ENCODE measurements at regions of chr7 and their contacts with region 1.

Region 1: GRCh38 chr7:42940985-42941847 is 9.0 kb downstream of the MRPL32 start:
- DNase-seq: peak; percentile 71 to 97 (median 84)
- H3K4me3 ChIP-seq: peak overlapping the region in 2 of 59 donors; percentile 1 to 5
- H3K27ac ChIP-seq: no peak overlapping the region
- H3K27me3 ChIP-seq: no peaks in the 10 kb centered on the region
- CTCF ChIP-seq: peak; percentile 75 to 97 (median 89)

Region 2: DNA sequence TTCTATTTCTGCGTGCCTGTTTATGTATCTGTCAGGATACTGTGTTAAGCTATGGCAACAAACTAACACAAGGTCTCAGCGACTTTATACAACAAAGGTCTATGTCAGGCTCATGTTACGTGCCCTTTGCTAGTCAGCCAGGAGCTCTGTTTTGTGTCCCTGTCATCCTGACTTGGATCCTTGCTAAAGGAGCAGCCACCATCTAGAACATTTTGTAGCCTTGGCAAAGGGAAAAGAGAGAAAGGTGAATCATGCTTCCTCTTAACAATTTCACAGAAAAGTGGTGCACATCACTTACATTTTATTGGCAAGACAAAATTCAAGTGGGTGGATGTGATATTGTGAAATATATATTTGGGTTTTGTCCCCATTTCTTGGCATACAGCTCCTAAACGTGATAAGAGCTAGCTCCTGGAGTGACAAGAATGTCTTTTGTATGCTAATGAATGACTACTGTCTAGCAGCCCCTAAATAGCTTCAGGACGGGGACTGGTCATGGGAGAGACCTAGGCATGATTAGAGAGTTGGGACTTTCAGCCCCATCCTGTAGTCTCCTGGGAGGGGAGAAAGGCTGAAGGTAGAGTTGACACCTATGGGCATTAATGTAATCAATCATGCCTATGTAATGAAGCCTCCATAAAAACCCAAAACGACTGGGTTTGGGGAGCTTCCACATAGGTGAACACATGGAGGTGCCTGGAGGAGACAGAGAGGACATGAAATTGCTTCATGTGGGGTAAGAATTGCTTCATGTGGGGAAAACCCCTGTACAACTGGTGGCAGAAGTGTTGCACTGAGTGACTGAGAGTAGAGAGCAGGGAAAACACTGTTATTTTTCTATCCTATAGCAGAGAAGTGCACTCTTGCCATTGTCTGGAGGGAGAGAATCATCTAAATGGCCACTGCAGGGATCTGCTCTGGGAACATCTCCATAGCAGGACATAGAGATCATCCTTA is 23.9 kb after region 1 on chr7:
- intact Hi-C with region 1: no loop called
- DNase-seq: no peak
- H3K4me3 ChIP-seq: no peak overlapping the region
- H3K27ac ChIP-seq: peak overlapping the region in 40 of 59 donors; percentile 1 to 80 (median 58)
- H3K27me3 ChIP-seq: no peaks in the 10 kb centered on the region
- CTCF ChIP-seq: no peak

Region 3: DNA sequence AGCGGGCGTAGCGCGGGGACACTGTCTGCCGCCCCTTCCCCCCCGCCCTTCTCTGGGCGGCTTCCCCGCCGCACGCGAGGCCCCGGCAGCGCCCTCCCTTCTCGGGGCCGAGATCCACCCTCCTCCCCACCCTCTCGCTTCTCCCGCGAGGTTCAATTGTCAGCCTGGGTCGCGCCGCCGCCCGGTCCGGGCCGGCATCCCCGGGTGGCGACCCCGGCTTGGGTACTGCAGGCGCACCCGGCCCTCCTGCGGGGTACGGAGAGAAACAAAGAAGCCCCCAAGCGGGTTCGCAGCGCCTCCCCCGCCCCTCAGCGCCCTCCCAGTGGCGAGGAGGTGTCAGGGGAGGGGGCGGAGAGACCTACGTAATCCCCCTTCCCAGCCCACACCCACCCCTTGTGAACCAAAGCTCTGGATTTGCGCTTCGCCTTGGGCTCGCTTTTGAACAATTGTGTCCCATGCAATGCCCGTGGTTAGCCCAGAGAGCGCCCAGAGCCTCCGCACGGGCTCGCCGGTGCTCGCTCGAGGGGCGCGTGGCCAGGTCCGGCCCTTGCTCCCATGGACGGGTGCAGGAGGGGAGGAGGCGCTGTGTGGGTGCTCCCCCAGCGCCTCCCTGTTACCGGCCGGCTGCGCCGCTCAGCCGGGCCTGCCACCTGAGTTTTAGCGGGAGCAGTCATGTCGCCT is 171.9 kb after region 1 on chr7:
- intact Hi-C with region 1: loop called in 1 of 2 experiments (anchors 10 kb)
- DNase-seq: peak in 3 of 10 donors; percentile 21 to 51 (median 37)
- H3K4me3 ChIP-seq: peak overlapping the region; percentile 43 to 79 (median 69)
- H3K27ac ChIP-seq: peak overlapping the region in 57 of 59 donors; percentile 24 to 92 (median 83)
- H3K27me3 ChIP-seq: peaks cover 0 to 74% (median 27%) of the 10 kb centered on the region in 45 donors
- CTCF ChIP-seq: no peak

Region 4: DNA sequence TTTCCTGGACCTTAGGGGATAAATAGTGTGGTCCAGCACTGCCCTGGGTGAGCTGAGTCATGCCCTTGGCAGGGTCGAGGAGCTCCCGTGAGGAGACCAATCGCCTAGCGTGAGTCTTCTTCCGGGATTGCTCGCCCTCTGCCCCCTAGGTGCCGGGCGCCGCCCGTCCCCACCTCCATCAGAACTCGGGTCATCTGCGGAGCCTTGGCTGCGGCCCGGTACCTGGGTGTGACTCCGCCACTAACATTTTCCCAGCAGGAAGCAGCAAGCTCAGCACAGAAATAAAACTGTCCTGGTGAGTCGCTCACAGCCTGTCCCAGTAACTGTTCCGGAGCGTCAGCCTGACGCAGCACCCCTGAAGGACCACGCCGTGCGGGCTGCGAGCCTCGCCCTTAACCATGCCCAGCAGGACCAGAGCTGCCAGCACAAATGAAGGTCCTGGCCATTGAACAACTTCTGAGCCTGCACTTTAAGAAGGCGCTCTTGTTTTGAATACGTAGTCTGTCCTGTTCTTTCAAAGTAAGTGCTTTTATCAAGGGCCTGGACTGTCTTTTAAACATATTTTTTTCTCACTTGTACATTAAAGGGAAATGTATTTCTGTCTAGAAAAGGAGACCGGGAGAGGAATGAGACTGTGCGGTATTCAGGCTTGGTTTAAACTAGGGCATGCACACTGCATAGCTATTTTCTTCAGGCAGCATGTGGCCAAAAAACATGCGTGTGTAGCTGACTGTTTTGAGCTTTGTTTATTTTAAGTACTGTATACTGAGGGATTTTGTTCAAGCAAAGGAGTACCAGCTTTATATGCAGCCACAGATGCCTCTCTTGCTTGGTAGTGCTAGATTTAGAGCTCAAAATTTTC is 308.0 kb after region 1 on chr7:
- intact Hi-C with region 1: loop called in 1 of 2 experiments (anchors 5 kb)
- DNase-seq: peak in 5 of 10 donors; percentile 45 to 63 (median 49)
- H3K4me3 ChIP-seq: peak overlapping the region in 53 of 59 donors; percentile 3 to 57 (median 39)
- H3K27ac ChIP-seq: peak overlapping the region in 58 of 59 donors; percentile 26 to 94 (median 82)
- H3K27me3 ChIP-seq: no peaks in the 10 kb centered on the region
- CTCF ChIP-seq: no peak

Region 5: DNA sequence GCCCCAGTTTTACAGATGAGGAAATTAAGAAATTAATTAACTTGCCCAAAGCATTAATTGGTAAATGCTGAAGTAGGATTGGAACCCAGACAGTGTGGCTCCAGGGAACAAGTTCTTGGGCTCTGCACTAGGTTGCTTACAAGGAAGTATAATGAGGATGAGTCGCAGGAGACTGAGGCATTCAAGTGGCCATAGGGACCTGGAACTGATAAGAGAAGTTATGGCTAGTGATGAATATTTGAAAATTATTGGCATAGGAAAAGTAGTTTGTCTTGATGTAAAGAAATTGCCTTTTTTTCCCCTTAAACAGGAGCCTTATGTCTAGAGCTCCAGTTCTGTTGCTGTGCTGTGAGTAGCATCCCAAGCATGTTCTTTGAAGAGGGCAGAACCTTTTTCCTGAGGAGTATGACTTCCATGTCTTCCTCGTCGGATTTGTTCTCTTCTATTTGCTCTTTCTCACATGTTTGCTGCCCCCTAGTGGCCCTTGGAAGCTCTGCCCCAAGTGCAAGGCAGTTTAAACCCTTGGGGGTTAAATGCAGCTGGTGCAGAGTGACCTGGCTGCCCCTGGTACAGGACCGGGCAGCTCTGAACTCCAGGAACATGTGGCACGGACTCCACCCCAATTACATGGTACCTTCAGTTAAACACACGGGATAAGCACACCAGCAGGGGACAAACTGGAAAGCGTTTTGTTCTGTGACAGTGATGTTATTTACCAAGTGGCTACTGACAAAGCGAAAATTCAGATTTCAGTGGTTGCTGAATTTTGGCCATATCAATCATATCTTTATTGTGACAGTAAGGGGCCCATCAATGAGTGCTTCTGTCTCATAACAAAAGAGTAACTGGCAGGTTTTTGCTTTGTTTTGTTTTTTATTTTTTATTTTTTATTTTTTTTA is 320.0 kb after region 1 on chr7:
- intact Hi-C with region 1: loop called in 1 of 2 experiments (anchors 2 kb)
- DNase-seq: peak in 9 of 10 donors; percentile 35 to 71 (median 57)
- H3K4me3 ChIP-seq: no peak overlapping the region
- H3K27ac ChIP-seq: no peak overlapping the region
- H3K27me3 ChIP-seq: no peaks in the 10 kb centered on the region
- CTCF ChIP-seq: peak; percentile 67 to 95 (median 84)

Region 6: DNA sequence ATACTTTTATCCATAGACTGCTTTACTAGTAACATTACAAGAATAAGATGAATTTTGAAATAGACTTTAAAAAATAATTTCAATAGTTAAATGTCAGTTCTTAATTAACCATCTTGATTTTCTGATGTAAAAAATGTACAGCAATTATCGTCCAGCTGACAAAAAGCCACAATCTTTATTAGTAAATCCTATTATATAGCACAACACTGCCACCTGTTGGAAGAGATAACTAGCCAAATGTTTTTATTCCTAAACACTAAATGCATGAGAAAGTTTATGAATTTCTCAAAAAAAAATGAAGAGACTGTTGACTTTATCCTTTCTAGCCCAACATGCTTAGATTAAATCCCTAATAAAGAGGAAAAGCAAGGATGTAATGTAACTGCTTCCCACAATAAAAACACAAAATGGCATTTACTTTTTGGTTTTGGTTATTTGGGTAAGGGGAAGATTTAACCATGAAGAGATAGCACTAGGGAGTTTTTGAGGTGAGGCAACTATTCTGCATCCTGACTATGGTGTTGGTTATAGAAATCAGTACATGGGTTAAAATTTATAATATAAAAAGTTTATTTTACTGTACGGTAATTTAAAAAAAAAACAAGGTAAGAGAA is 780.1 kb after region 1 on chr7:
- intact Hi-C with region 1: loop called in 1 of 2 experiments (anchors 5 kb)
- DNase-seq: no peak
- H3K4me3 ChIP-seq: no peak overlapping the region
- H3K27ac ChIP-seq: no peak overlapping the region
- H3K27me3 ChIP-seq: no peaks in the 10 kb centered on the region
- CTCF ChIP-seq: peak; percentile 48 to 88 (median 75)

Measured in dorsolateral prefrontal cortex (tissue), 120 donors.